Activated B cell treated with CpG ODN at 0.5 μM for 24 hours (primary cell): ENCODE measurements at regions of chr19 and their contacts with region 1.

Region 1: DNA sequence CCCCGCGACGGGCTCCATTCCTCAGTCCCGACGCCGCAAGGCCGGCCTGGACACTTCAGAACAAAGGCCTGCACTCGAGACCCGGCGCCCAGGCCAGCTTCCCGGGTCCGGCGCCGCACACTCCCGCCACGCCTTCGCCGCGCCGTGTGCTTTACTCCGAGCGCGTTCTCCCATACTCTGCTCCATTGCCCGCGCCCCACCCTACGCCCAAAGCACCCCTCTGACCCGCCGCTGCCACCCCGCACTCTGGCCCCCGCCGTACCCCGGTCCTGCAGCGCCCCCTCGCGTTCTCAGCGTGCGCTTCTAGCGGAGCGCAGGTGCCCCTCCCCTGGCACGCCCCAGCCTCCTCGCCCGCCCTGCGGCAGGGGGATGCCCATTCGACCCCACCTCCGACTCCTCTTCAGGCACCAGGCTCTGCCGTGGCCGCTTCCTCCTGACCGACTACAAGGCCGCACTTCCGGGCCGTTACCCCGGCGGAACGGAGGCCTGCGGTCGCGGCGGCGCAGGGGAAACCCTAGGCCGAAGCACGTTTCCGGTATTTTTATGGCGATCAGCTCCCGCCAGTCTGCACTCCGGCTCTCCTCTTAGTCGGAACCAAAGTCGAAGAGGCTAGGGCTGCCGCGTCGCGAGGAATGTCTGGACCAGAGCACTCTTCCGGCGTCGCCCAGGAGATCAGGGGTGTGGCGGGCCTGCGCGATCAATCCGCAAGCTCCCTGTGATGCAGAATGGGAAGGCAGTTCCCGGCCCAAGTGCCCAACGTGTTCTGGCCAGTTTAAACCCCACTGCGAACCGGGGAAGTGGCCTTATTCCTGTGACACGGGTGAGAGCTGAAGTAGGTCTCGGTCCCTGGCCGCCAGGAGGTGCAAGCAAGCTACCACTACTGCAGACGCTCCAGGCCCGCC is at the start of gene ZBTB45:
- DNase-seq: peak; percentile 88
- ATAC-seq: peak; percentile 83
- H3K4me3 Mint-ChIP-seq: peak within 1 kb of the TSS; percentile 95
- H3K27ac Mint-ChIP-seq: peak within 1 kb of the TSS; percentile 97
- H3K4me1 Mint-ChIP-seq: peaks cover 39% of the 10 kb centered on the region
- H3K27me3 Mint-ChIP-seq: no peaks in the 10 kb centered on the region
- CTCF ChIP-seq: no peak
- total RNA-seq, gene ZBTB45: 18.0 and 20.2 TPM in 2 replicates

Region 2: GRCh38 chr19:58154679-58155648 is 364.6 kb before region 1 on chr19:
- CTCF ChIA-PET with region 1: interaction called, 5 read pairs
- POLR2A ChIA-PET with region 1: interaction called, 3 read pairs
- intact Hi-C with region 1: loop called (anchors 1 kb)
- DNase-seq: peak; percentile 99
- ATAC-seq: peak; percentile 82
- H3K4me3 Mint-ChIP-seq: peak overlapping the region; percentile 82
- H3K27ac Mint-ChIP-seq: peak overlapping the region; percentile 70
- H3K4me1 Mint-ChIP-seq: peaks cover 12% of the 10 kb centered on the region
- H3K27me3 Mint-ChIP-seq: no peaks in the 10 kb centered on the region
- CTCF ChIP-seq: peak; percentile 16

Region 3: DNA sequence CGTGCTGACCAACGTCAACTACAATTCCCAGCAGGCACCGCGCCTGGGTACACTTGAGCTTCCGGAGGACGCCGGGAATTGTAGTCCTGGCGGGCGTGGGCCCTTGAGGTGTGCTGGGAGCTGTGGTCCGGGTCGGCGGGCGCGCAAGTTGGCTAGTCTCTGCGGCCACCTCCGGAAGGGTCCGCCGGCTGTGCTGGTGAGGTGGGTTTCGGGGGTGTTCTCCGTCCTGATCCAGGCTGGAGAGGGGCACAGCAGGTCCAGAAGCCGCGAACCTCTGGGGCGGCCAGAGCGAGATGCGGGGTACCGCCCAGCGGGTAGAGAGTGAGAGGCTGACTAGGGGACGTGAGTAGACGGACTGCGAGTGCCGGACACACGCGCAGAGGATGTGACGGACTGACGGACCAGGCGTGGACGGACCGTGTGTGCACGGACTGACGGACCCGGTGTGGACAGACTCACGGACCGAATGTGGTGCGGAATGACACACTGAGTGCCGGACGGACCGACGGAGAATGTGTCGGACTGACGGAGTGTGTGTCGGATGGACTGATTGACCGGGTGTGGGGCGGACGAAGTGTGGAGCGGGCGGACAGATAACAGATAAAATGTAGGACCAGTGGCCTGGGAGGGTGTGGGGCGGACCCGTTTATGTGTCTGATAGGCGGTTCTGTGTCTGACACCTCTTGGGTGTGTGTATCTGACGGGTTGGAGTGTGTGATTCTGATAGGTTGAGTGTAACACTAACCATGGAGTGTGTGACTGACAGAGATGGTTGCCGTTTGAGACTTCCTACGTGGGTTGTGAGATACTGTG is 192.5 kb before region 1 on chr19 and contains the start of gene ZSCAN22:
- CTCF ChIA-PET with region 1: interaction called, 5 read pairs
- POLR2A ChIA-PET with region 1: interaction called, 16 read pairs
- intact Hi-C with region 1: loop called (anchors 1 kb)
- DNase-seq: peak; percentile 82
- ATAC-seq: peak; percentile 88
- H3K4me3 Mint-ChIP-seq: no peak within 1 kb of the TSS
- H3K27ac Mint-ChIP-seq: no peak within 1 kb of the TSS
- H3K4me1 Mint-ChIP-seq: peaks cover 2% of the 10 kb centered on the region
- H3K27me3 Mint-ChIP-seq: no peaks in the 10 kb centered on the region
- CTCF ChIP-seq: no peak
- total RNA-seq, gene ZSCAN22: 4.7 and 4.8 TPM in 2 replicates

Region 4: DNA sequence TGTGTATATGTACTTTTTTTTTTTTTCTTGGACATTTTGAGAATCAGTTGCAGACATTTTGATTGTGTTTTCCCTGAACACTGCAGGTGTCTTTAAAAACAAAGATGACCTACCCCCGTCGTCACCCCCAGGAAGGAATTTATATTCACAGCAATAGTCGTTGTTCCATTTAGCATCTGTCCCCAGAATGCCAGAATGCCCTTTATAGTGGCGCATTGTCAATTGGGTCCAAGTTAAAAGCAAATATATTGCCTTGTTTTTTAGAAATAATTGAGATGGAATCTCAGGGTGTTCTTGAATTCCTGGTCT is 125.9 kb before region 1 on chr19:
- CTCF ChIA-PET with region 1: no interaction called
- POLR2A ChIA-PET with region 1: no interaction called
- intact Hi-C with region 1: no loop called
- DNase-seq: no peak
- ATAC-seq: no peak
- H3K4me3 Mint-ChIP-seq: no peak overlapping the region
- H3K27ac Mint-ChIP-seq: no peak overlapping the region
- H3K4me1 Mint-ChIP-seq: peaks cover 21% of the 10 kb centered on the region
- H3K27me3 Mint-ChIP-seq: peaks cover 4% of the 10 kb centered on the region
- CTCF ChIP-seq: no peak

Region 5: GRCh38 chr19:58408152-58409009 is 111.2 kb before region 1 on chr19 and contains the start of gene ZNF584:
- CTCF ChIA-PET with region 1: no interaction called
- POLR2A ChIA-PET with region 1: interaction called, 11 read pairs
- intact Hi-C with region 1: loop called (anchors 1 kb)
- DNase-seq: peak; percentile 93
- ATAC-seq: peak; percentile 95
- H3K4me3 Mint-ChIP-seq: peak within 1 kb of the TSS; percentile 95
- H3K27ac Mint-ChIP-seq: peak within 1 kb of the TSS; percentile 92
- H3K4me1 Mint-ChIP-seq: peaks cover 32% of the 10 kb centered on the region
- H3K27me3 Mint-ChIP-seq: no peaks in the 10 kb centered on the region
- CTCF ChIP-seq: no peak
- total RNA-seq, gene ZNF584: 8.6 and 9.6 TPM in 2 replicates

Region 6: GRCh38 chr19:58434217-58434616 is 85.4 kb before region 1 on chr19:
- CTCF ChIA-PET with region 1: no interaction called
- POLR2A ChIA-PET with region 1: no interaction called
- intact Hi-C with region 1: no loop called
- DNase-seq: no peak
- ATAC-seq: no peak
- H3K4me3 Mint-ChIP-seq: no peak overlapping the region
- H3K27ac Mint-ChIP-seq: no peak overlapping the region
- H3K4me1 Mint-ChIP-seq: peaks cover 7% of the 10 kb centered on the region
- H3K27me3 Mint-ChIP-seq: no peaks in the 10 kb centered on the region
- CTCF ChIP-seq: no peak

Region 7: DNA sequence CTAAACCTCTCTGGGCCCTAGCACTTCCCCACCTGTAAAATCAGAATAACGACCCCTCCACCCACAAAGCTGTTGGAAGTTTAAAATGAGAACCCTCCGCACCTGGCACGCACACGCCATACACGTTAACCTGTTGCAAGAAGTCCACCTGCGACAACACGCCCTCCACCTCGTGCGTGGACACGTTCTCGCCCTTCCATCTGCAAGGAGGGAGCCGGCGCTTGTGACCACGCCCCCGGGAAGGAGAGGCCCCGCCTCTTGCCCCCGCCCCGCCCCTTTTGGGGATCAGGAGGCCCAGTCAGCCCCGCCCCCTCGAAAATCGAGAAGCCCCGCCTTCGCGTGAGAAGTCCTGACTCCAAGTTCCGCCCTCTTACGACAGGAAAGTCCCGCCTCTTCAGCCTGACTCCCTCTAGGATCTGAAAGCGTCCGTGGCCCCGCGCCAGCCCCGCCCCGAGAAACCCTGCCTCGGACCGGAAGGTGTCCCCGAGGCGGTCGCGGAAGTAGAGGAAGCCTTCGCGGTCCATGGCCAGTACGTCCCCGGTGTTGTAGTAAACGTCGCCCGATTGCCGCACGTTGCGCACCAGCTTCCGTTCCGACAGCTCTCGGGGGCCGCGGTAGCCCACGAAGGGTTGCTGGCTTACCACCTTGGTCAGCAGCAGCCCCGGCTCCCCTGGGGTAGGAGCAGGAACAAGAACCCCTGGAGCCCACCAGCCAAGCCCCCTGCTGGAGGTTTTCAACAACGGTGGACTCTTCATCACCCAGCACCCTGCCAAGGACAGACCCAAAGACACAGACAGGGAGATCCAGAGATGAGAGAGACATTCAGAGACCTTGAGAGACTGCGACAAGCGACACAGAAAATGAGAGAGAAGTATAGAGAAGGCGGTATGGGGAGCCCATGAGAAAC is 20.3 kb before region 1 on chr19:
- CTCF ChIA-PET with region 1: interaction called, 10 read pairs
- POLR2A ChIA-PET with region 1: interaction called, 42 read pairs
- intact Hi-C with region 1: loop called (anchors 1 kb)
- DNase-seq: peak; percentile 89
- ATAC-seq: peak; percentile 92
- H3K4me3 Mint-ChIP-seq: peak overlapping the region; percentile 92
- H3K27ac Mint-ChIP-seq: peak overlapping the region; percentile 90
- H3K4me1 Mint-ChIP-seq: peaks cover 24% of the 10 kb centered on the region
- H3K27me3 Mint-ChIP-seq: no peaks in the 10 kb centered on the region
- CTCF ChIP-seq: no peak

Region 8: GRCh38 chr19:58543826-58544590 is 24.4 kb after region 1 on chr19 and contains the start of gene TRIM28:
- CTCF ChIA-PET with region 1: interaction called, 17 read pairs
- POLR2A ChIA-PET with region 1: interaction called, 82 read pairs
- intact Hi-C with region 1: loop called (anchors 1 kb)
- DNase-seq: peak; percentile 100
- ATAC-seq: peak; percentile 87
- H3K4me3 Mint-ChIP-seq: peak within 1 kb of the TSS; percentile 94
- H3K27ac Mint-ChIP-seq: peak within 1 kb of the TSS; percentile 98
- H3K4me1 Mint-ChIP-seq: peaks cover 27% of the 10 kb centered on the region
- H3K27me3 Mint-ChIP-seq: peaks cover 16% of the 10 kb centered on the region
- CTCF ChIP-seq: no peak
- total RNA-seq, gene TRIM28: 380 and 407 TPM in 2 replicates

Region 9: GRCh38 chr19:58581227-58582151 is 61.9 kb after region 1 on chr19:
- CTCF ChIA-PET with region 1: interaction called, 62 read pairs
- POLR2A ChIA-PET with region 1: interaction called, 75 read pairs
- intact Hi-C with region 1: loop called (anchors 1 kb)
- DNase-seq: peak; percentile 73
- ATAC-seq: peak; percentile 99
- H3K4me3 Mint-ChIP-seq: no peak overlapping the region
- H3K27ac Mint-ChIP-seq: peak overlapping the region; percentile 41
- H3K4me1 Mint-ChIP-seq: peaks cover 23% of the 10 kb centered on the region
- H3K27me3 Mint-ChIP-seq: no peaks in the 10 kb centered on the region
- CTCF ChIP-seq: no peak